Astrocyte of the cerebellum (primary cell): ENCODE measurements at regions of chr5 and their contacts with region 1.

Region 1: DNA sequence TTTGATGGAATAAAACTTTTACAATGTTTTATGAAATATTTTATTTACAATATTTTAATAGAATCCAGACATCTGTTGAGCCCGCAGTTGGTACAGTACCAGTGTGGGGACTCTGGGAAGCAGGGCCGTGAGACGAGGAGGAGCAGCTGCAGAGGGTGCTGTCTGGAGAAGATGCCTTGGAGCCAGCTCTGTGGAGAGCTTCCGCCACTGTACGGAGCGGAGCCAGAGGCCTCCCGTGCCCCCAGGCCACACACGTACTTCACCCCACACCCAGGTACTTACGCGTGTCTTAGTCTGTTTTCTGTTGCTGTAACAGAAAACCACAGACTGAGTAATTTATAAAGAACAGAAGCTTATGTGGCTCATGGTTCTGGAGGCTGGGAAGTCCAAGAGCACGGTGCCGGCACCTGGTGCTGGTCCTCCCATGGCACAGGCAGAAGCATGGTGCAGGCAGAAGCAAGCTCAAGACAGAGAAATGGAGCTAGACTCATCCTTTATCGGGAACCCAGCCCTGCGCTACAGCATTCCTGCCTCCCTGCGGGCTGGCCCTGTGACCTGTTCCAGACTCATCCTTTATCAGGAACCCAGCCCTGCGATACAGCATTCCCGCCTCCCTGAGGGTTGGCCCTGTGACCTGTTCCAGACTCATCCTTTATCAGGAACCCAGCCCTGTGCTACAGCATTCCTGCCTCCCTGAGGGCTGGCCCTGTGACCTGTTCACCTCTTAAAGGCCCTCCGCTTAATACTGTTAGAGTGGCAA is 23.4 kb downstream of the CEP72 start:
- DNase-seq: no peak
- H3K4me3 ChIP-seq: no peak overlapping the region
- CTCF ChIP-seq: no peak

Region 2: GRCh38 chr5:671459-672328 is 36.2 kb after region 1 on chr5:
- in situ Hi-C with region 1: loop called (anchors 5 kb)
- DNase-seq: peak; percentile 16
- H3K4me3 ChIP-seq: no peak overlapping the region
- CTCF ChIP-seq: peak; percentile 95